Lower lobe of right lung (tissue), 2 donors: ENCODE measurements at regions of chr7 and their contacts with region 1.

Region 1: GRCh38 chr7:140810830-140811556 is 113.7 kb downstream of the BRAF start:
- DNase-seq: no peak
- ATAC-seq: peak; percentile 90 to 93
- H3K4me3 ChIP-seq: no peak overlapping the region
- H3K27ac ChIP-seq: no peak overlapping the region
- H3K4me1 ChIP-seq: no peaks in the 10 kb centered on the region
- H3K27me3 ChIP-seq: no peaks in the 10 kb centered on the region
- CTCF ChIP-seq: peak; percentile 78

Region 2: GRCh38 chr7:141014524-141015395 is 203.8 kb after region 1 on chr7 and contains the start of gene MRPS33:
- intact Hi-C with region 1: loop called (anchors 5 kb)
- DNase-seq: peak; percentile 96
- ATAC-seq: peak; percentile 100
- H3K4me3 ChIP-seq: peak within 1 kb of the TSS; percentile 69
- H3K27ac ChIP-seq: peak within 1 kb of the TSS; percentile 88
- H3K4me1 ChIP-seq: peaks cover 7% of the 10 kb centered on the region
- H3K27me3 ChIP-seq: peaks cover 3% of the 10 kb centered on the region
- CTCF ChIP-seq: peak; percentile 41
- total RNA-seq, gene MRPS33: 34.6 TPM

Region 3: GRCh38 chr7:141541375-141541774 is 730.4 kb after region 1 on chr7:
- intact Hi-C with region 1: no loop called
- DNase-seq: no peak
- ATAC-seq: no peak
- H3K4me3 ChIP-seq: no peak overlapping the region
- H3K27ac ChIP-seq: no peak overlapping the region
- H3K4me1 ChIP-seq: no peaks in the 10 kb centered on the region
- H3K27me3 ChIP-seq: peaks cover 3% of the 10 kb centered on the region
- CTCF ChIP-seq: no peak